H1 (cell line): ENCODE measurements at regions of chr14 and their contacts with region 1.

Region 1: DNA sequence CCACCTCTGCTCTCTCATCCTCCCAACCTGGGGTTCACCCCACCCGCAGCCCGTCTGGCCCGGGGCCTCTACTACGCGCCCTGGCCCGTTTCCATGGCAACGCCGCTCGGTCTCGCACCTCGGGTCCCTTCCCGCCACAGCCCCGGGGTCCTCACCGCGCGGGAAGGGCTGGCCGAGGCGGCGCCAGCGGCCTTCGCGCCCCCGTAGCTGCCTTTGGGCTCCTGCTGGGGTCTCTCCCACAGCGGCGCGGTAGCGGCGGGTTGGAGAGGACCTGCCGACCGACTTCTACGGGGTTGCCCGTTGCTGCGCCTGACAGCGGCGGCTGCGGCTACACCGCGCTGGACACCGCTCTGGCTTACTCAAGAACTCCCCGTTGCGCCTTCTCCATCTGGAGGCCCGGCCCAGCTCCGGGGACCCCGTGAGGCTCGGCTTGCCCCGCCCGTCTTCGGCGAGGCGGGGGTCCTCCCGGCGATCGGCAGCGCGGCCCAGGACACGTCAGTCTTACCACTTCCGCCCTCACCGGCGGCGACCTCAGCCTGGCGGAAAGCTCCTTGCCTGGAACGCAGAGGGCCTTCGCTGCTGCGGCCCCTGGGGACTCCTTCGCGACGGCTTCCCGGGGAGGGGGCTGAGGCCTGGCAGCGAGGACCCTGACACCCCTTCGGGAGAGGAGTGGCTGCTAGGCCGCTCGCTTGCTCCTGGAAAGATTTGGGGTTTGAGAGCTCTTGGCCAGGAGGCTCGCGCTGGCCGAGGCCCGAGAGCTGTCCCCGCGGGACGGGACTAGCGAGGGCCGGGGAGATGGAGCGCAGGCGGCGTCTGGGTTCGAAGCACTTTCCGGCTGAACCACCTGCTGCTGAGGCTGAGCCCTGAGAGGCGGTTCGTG is at the start of gene TM9SF1:
- DNase-seq: peak; percentile 83 to 93
- H3K4me3 ChIP-seq: peak within 1 kb of the TSS; percentile 65 to 88 (median 84)
- H3K27ac ChIP-seq: peak within 1 kb of the TSS; percentile 95
- H3K4me1 ChIP-seq: peaks cover 0 to 9% (median 3%) of the 10 kb centered on the region in 4 experiments; a peak in 3 of 7 replicates
- H3K27me3 ChIP-seq: no peaks in the 10 kb centered on the region
- CTCF ChIP-seq: peak in 1 of 3 experiments; percentile 8; a peak in 1 of 4 replicates
- EP300 ChIP-seq: no peak
- POLR2A ChIP-seq: peak; percentile 7 to 61; a peak in 2 of 3 replicates
- RAD21 ChIP-seq: no peak
- total RNA-seq, gene TM9SF1: 22.2 and 25.3 TPM in 2 replicates

Region 2: GRCh38 chr14:23446291-23446851 is 749.1 kb before region 1 on chr14:
- CTCF ChIA-PET with region 1: no interaction called
- POLR2A ChIA-PET with region 1: no interaction called
- DNase-seq: no peak
- H3K4me3 ChIP-seq: no peak overlapping the region
- H3K27ac ChIP-seq: no peak overlapping the region
- H3K4me1 ChIP-seq: peaks cover 2 to 12% (median 9%) of the 10 kb centered on the region in 4 experiments
- H3K27me3 ChIP-seq: no peaks in the 10 kb centered on the region; a peak in 2 of 7 replicates
- CTCF ChIP-seq: peak in 2 of 3 experiments; percentile 12 to 27; a peak in 2 of 4 replicates
- EP300 ChIP-seq: no peak
- POLR2A ChIP-seq: no peak
- RAD21 ChIP-seq: peak; percentile 38 to 56; a peak in 3 of 4 replicates

Region 3: GRCh38 chr14:24072436-24072835 is 123.0 kb before region 1 on chr14:
- CTCF ChIA-PET with region 1: no interaction called
- POLR2A ChIA-PET with region 1: no interaction called
- DNase-seq: no peak
- H3K4me3 ChIP-seq: no peak overlapping the region
- H3K27ac ChIP-seq: no peak overlapping the region
- H3K4me1 ChIP-seq: peaks cover 0 to 1% (median 0%) of the 10 kb centered on the region in 4 experiments; a peak in 1 of 7 replicates
- H3K27me3 ChIP-seq: no peaks in the 10 kb centered on the region; a peak in 1 of 7 replicates
- CTCF ChIP-seq: no peak
- EP300 ChIP-seq: no peak
- POLR2A ChIP-seq: no peak
- RAD21 ChIP-seq: no peak

Region 4: GRCh38 chr14:24179961-24180796 is 15.3 kb before region 1 on chr14:
- CTCF ChIA-PET with region 1: no interaction called
- POLR2A ChIA-PET with region 1: interaction called, 158 read pairs
- DNase-seq: no peak
- H3K4me3 ChIP-seq: no peak overlapping the region
- H3K27ac ChIP-seq: no peak overlapping the region
- H3K4me1 ChIP-seq: no peaks in the 10 kb centered on the region
- H3K27me3 ChIP-seq: no peaks in the 10 kb centered on the region
- CTCF ChIP-seq: no peak
- EP300 ChIP-seq: no peak
- POLR2A ChIP-seq: no peak
- RAD21 ChIP-seq: no peak

Region 5: GRCh38 chr14:24403294-24403998 is 208.0 kb after region 1 on chr14:
- CTCF ChIA-PET with region 1: no interaction called
- POLR2A ChIA-PET with region 1: no interaction called
- DNase-seq: no peak
- H3K4me3 ChIP-seq: no peak overlapping the region
- H3K27ac ChIP-seq: no peak overlapping the region
- H3K4me1 ChIP-seq: peaks cover 0 to 6% (median 4%) of the 10 kb centered on the region in 4 experiments; a peak in 4 of 7 replicates
- H3K27me3 ChIP-seq: no peaks in the 10 kb centered on the region
- CTCF ChIP-seq: no peak
- EP300 ChIP-seq: no peak
- POLR2A ChIP-seq: no peak
- RAD21 ChIP-seq: no peak